A673 (cell line): ENCODE measurements at regions of chr5 and their contacts with region 1.

Region 1: GRCh38 chr5:135034236-135034962 is 371 bp upstream of the PITX1 start:
- DNase-seq: peak; percentile 46
- H3K4me3 ChIP-seq: peak overlapping the region; percentile 66
- H3K27ac ChIP-seq: no peak overlapping the region
- H3K4me1 ChIP-seq: peaks cover 4% of the 10 kb centered on the region
- H3K27me3 ChIP-seq: peaks cover 70% of the 10 kb centered on the region
- CTCF ChIP-seq: no peak

Region 2: DNA sequence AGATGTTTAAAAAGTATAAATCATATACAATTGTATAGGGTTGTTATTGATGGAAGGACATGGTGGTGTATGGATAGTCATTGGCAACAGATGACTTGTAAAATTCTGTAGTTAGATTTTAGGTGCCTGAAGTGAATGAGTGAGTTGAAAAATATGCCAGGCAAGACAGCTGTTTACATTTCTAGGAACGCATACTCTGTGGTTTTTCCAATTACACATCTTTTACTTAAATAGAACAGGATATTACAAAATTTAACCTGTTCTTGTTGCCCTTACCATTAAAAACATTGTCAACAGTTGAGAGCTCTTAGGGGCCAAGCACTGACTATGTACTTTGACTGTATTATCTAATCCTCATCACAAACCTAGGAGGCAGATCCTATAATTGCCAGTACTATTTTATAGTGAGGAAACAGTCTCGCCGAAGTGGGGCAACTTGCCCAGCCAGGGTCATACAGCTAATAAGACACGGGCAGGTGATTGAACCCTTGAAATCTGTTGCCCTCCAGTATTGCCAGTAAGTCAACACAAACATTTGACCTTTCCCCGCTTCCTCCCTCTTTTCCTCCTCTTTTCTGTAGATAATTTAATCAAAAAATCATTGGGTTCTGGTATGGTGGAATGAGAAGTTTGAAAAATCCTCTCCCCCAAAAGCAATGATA is 276.1 kb after region 1 on chr5:
- CTCF ChIA-PET with region 1: no interaction called
- POLR2A ChIA-PET with region 1: no interaction called
- intact Hi-C with region 1: loop called (anchors 5 kb)
- DNase-seq: no peak
- H3K4me3 ChIP-seq: no peak overlapping the region
- H3K27ac ChIP-seq: no peak overlapping the region
- H3K4me1 ChIP-seq: no peaks in the 10 kb centered on the region
- H3K27me3 ChIP-seq: no peaks in the 10 kb centered on the region
- CTCF ChIP-seq: no peak